Activated CD4-positive, alpha-beta T cell treated with anti-CD3 and anti-CD28 coated beads for 36 hours (primary cell): ENCODE measurements at regions of chr15 and their contacts with region 1.

Region 1: GRCh38 chr15:38229705-38230310 is 22.8 kb upstream of the SPRED1 start:
- DNase-seq: no peak
- ATAC-seq: no peak
- H3K4me3 Mint-ChIP-seq: no peak overlapping the region
- H3K27ac Mint-ChIP-seq: no peak overlapping the region
- H3K4me1 Mint-ChIP-seq: no peaks in the 10 kb centered on the region
- H3K27me3 Mint-ChIP-seq: peaks cover 5% of the 10 kb centered on the region

Region 2: DNA sequence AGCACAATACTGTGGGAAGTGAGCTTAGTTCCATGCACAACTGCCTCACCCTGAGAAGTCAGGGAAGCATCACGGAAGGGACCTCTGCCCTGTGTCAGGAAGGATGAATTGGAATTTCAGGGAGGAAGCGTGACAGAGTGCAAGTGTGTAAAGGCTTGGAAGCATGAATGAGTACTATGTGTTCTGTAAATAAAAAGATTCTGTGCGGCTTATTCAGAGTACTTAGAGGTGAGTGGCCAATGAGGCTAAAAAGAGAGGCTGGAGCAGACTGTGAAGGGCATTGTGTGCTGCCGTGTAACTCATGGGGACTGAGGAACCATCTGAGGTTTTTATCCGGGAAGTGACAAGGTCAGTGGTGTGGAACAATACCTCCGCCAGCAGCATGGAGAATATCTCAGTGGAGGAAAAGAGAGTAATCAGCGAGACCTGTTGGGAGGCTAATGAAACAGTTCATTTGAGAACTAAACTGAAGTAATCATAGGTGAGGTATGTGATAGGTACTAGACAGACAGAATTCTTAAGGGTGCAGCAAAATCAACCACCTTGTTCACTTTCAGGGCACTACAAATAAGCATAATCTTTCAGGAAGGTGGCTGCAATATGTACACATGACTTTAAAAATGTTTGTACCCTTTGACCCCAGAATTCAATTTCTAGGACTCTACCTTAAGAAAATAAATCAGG is 42.0 kb before region 1 on chr15:
- CTCF ChIA-PET with region 1: no interaction called
- POLR2A ChIA-PET with region 1: no interaction called
- intact Hi-C with region 1: loop called in 1 of 2 experiments (anchors 10 kb)
- DNase-seq: no peak
- ATAC-seq: no peak
- H3K4me3 Mint-ChIP-seq: no peak overlapping the region
- H3K27ac Mint-ChIP-seq: no peak overlapping the region
- H3K4me1 Mint-ChIP-seq: no peaks in the 10 kb centered on the region
- H3K27me3 Mint-ChIP-seq: peaks cover 18% of the 10 kb centered on the region

Region 3: GRCh38 chr15:38324939-38325647 is 95.3 kb after region 1 on chr15:
- CTCF ChIA-PET with region 1: no interaction called
- POLR2A ChIA-PET with region 1: no interaction called
- intact Hi-C with region 1: no loop called
- DNase-seq: no peak
- ATAC-seq: no peak
- H3K4me3 Mint-ChIP-seq: no peak overlapping the region
- H3K27ac Mint-ChIP-seq: no peak overlapping the region
- H3K4me1 Mint-ChIP-seq: no peaks in the 10 kb centered on the region
- H3K27me3 Mint-ChIP-seq: no peaks in the 10 kb centered on the region